ENCODE measurements at regions of chr6 and their contacts with region 1.

Region 1: GRCh38 chr6:72616406-72617015 is 5.4 kb upstream of the KCNQ5 start:
- DNase-seq: no peak
- H3K4me3 ChIP-seq: no peak overlapping the region
- H3K27ac ChIP-seq: no peak overlapping the region
- H3K4me1 ChIP-seq: peaks cover 0 to 13% (median 5%) of the 10 kb centered on the region in 4 experiments; a peak in 5 of 7 replicates
- H3K27me3 ChIP-seq: peaks cover 9 to 29% (median 25%) of the 10 kb centered on the region in 4 experiments
- CTCF ChIP-seq: peak in 2 of 3 experiments; percentile 35 to 47; a peak in 2 of 4 replicates
- EP300 ChIP-seq: no peak
- POLR2A ChIP-seq: no peak
- RAD21 ChIP-seq: peak; percentile 49 to 54

Region 2: GRCh38 chr6:72425003-72425681 is 191.4 kb before region 1 on chr6:
- CTCF ChIA-PET with region 1: interaction called, 13 read pairs
- POLR2A ChIA-PET with region 1: no interaction called
- DNase-seq: no peak
- H3K4me3 ChIP-seq: no peak overlapping the region
- H3K27ac ChIP-seq: no peak overlapping the region
- H3K4me1 ChIP-seq: no peaks in the 10 kb centered on the region
- H3K27me3 ChIP-seq: no peaks in the 10 kb centered on the region
- CTCF ChIP-seq: no peak
- EP300 ChIP-seq: no peak
- POLR2A ChIP-seq: no peak
- RAD21 ChIP-seq: no peak

Region 3: DNA sequence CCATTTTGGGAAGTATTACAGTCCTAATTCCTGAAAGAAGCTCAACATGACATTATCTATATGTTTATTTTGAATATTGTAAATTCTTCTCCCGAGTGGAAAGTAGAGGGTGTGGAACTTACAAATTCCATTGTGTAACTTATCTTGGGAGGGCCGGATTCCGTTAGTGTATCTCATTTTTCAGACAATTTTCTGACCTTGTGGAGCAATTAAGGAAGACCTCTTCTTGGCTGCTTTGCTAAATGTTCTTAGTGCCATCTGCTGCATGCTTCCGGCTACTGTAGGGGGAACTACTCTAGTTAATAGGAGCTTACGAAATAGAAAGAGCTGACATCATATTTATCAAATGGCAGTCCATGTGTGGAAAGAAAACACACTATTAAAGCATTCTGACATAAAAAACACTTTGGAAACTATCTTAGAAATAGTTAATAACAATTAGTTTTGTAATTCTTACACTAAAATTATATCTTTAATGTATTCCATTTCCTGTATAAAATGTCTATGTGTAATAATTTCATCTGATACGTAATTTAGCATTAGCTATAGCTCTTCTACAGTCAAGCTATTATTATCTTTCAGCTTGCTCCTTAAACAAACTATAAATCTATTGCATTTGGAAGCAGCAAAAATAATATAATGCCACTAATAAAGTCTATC is 36.1 kb before region 1 on chr6:
- CTCF ChIA-PET with region 1: interaction called, 11 read pairs
- POLR2A ChIA-PET with region 1: no interaction called
- DNase-seq: peak in 1 of 2 experiments; percentile 9
- H3K4me3 ChIP-seq: no peak overlapping the region
- H3K27ac ChIP-seq: no peak overlapping the region
- H3K4me1 ChIP-seq: no peaks in the 10 kb centered on the region
- H3K27me3 ChIP-seq: no peaks in the 10 kb centered on the region
- CTCF ChIP-seq: peak in 2 of 3 experiments; percentile 62 to 83; a peak in 3 of 4 replicates
- EP300 ChIP-seq: no peak
- POLR2A ChIP-seq: no peak
- RAD21 ChIP-seq: peak; percentile 90 to 92

Region 4: DNA sequence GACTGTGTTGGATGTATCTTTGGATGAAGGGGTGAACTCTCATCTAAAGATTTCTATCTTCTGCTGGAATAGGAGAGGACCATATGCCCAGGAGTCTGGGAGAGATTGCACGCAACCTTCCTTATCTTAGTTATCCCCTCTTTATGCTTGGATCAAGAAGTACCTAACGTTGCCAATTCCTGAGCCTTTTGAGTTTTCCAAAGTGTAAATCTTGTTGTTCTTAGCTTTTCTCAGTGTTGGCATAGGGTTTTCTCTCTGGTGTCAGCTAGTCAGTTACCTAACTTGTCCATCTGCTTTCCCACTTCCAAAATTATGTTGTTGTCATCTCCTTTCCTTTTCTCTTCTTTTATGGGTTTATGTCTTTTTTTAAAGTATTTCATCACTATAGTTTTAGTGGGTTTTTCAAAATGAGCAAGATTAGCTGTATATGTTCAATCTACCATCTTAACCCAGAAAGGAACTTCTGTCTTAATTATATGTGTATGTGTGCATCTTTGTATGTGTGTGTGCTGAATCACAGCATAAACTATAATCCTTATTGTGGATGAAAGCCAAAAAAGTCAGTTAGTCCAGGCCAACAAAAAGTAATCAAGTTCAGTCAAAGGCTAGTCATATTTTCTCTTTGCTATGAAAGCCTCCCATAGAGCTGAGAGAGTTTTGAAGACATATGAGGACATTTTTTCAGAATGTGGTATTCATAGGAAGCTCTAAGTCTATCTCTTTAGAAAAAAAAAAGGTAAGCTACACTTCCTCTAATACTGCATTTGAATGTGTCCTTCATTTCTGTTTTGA is 536.7 kb after region 1 on chr6:
- CTCF ChIA-PET with region 1: interaction called, 10 read pairs
- POLR2A ChIA-PET with region 1: no interaction called
- DNase-seq: no peak
- H3K4me3 ChIP-seq: no peak overlapping the region
- H3K27ac ChIP-seq: no peak overlapping the region
- H3K4me1 ChIP-seq: no peaks in the 10 kb centered on the region
- H3K27me3 ChIP-seq: no peaks in the 10 kb centered on the region
- CTCF ChIP-seq: no peak
- EP300 ChIP-seq: no peak
- POLR2A ChIP-seq: no peak
- RAD21 ChIP-seq: no peak